ENCODE measurements at regions of chr7 and their contacts with region 1.

Region 1: DNA sequence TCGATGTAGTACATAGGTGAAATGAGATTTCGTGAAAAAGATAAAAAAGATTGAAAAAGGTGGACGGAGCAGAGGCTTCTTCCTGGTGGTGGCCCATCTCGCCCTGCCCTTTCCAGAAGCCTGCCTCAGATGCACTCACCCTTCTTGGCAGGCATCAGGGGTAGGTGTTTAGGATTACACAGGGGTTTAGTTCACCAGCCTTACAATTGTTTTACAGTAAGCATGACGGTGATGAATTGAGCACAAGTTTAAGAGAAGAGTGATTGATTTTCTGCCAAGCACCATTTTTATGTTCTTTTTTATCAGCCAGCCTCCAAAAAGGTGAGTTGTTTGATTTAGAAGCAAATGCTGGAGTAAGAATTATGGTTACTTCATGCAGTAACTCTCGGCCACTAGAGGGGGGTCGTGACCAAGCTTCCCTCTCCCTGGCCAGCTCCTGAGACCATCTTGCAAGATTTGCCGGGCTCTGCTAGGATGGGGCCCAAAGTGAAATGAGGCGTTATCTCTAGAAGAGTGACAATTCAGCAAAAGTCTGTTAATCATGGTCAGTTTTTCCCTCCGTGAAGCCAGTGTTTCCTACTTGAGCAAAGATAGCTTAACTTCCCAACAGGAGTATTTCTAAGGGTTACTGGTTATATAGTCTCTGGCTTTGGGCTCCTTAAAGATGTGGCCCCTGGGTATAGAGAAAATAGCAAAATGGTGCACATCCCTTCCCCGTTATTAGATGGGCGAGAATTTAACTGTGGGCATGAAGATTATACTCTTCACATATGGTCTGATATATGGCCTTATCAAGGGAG is 228.8 kb downstream of the BMPER start:
- DNase-seq: peak; percentile 77
- H3K4me3 Mint-ChIP-seq: peak overlapping the region; percentile 60
- H3K27ac Mint-ChIP-seq: peak overlapping the region; percentile 99
- H3K4me1 Mint-ChIP-seq: peaks cover 45% of the 10 kb centered on the region
- H3K27me3 Mint-ChIP-seq: no peaks in the 10 kb centered on the region
- CTCF ChIP-seq: peak; percentile 81

Region 2: DNA sequence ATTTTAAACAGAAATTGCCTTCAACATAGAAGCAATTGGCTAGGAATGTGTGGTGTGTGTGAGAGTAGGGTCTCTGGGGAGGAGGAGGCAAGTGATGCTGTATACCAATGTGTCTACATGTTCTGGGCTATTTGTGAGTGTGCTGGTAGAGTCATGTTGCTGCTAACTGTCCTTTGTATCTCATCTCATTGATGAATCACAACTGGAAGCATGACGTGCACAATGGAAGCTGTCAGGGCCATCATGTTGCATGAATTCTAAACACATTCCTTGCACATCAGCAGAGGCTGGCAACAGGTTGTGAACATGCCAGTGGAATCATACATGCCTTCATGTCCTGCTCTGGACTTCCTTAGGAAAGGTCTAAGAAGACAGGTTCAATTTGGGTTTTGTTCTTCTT is 29.2 kb before region 1 on chr7:
- CTCF ChIA-PET with region 1: interaction called, 12 read pairs
- POLR2A ChIA-PET with region 1: no interaction called
- intact Hi-C with region 1: no loop called
- DNase-seq: no peak
- H3K4me3 Mint-ChIP-seq: no peak overlapping the region
- H3K27ac Mint-ChIP-seq: no peak overlapping the region
- H3K4me1 Mint-ChIP-seq: peaks cover 5% of the 10 kb centered on the region
- H3K27me3 Mint-ChIP-seq: no peaks in the 10 kb centered on the region
- CTCF ChIP-seq: no peak

Region 3: GRCh38 chr7:34155220-34155908 is 21.2 kb after region 1 on chr7:
- CTCF ChIA-PET with region 1: interaction called, 37 read pairs
- POLR2A ChIA-PET with region 1: interaction called, 4 read pairs
- intact Hi-C with region 1: loop called (anchors 2 kb)
- DNase-seq: peak; percentile 95
- H3K4me3 Mint-ChIP-seq: no peak overlapping the region
- H3K27ac Mint-ChIP-seq: no peak overlapping the region
- H3K4me1 Mint-ChIP-seq: peaks cover 7% of the 10 kb centered on the region
- H3K27me3 Mint-ChIP-seq: no peaks in the 10 kb centered on the region
- CTCF ChIP-seq: no peak

Region 4: GRCh38 chr7:34165929-34166550 is 31.9 kb after region 1 on chr7:
- CTCF ChIA-PET with region 1: interaction called, 78 read pairs
- POLR2A ChIA-PET with region 1: interaction called, 4 read pairs
- intact Hi-C with region 1: loop called (anchors 1 kb)
- DNase-seq: peak; percentile 62
- H3K4me3 Mint-ChIP-seq: no peak overlapping the region
- H3K27ac Mint-ChIP-seq: no peak overlapping the region
- H3K4me1 Mint-ChIP-seq: no peaks in the 10 kb centered on the region
- H3K27me3 Mint-ChIP-seq: no peaks in the 10 kb centered on the region
- CTCF ChIP-seq: peak; percentile 56

Region 5: GRCh38 chr7:34191771-34192479 is 57.7 kb after region 1 on chr7:
- CTCF ChIA-PET with region 1: no interaction called
- POLR2A ChIA-PET with region 1: no interaction called
- intact Hi-C with region 1: no loop called
- DNase-seq: no peak
- H3K4me3 Mint-ChIP-seq: no peak overlapping the region
- H3K27ac Mint-ChIP-seq: no peak overlapping the region
- H3K4me1 Mint-ChIP-seq: no peaks in the 10 kb centered on the region
- H3K27me3 Mint-ChIP-seq: no peaks in the 10 kb centered on the region
- CTCF ChIP-seq: no peak

Region 6: DNA sequence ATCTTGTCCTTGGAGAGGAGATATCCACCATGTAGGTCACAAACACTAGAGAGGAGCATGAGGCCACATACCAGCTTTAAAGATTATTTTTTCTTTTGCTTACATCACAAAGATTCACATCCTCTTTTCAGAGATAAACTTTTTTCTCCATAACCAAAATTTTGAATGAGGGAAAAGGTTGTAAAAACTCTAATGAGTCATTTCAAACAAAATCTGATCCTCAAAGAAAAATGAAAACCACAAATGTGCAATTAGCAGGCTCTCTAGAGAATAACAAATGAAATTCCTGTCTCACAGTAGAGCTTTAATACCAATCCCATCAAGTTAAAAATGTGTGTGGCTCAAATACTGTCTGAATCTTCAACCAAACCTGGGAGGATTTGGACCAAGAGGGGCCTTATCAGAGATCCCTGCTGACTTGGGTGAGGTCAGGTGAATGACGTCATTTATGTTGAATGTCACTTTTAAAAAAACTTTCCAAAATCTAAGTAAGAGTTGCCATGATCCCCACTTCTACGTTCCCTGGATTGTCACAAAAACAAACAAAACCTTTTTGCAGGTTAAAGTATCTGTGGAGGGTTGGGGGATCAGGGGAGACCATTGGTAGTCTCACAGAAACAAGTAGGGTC is 262.4 kb after region 1 on chr7:
- CTCF ChIA-PET with region 1: no interaction called
- POLR2A ChIA-PET with region 1: no interaction called
- intact Hi-C with region 1: loop called (anchors 1 kb)
- DNase-seq: no peak
- H3K4me3 Mint-ChIP-seq: no peak overlapping the region
- H3K27ac Mint-ChIP-seq: no peak overlapping the region
- H3K4me1 Mint-ChIP-seq: no peaks in the 10 kb centered on the region
- H3K27me3 Mint-ChIP-seq: no peaks in the 10 kb centered on the region
- CTCF ChIP-seq: no peak

Region 7: GRCh38 chr7:34430458-34430857 is 296.3 kb after region 1 on chr7:
- CTCF ChIA-PET with region 1: interaction called, 9 read pairs
- POLR2A ChIA-PET with region 1: no interaction called
- intact Hi-C with region 1: loop called (anchors 1 kb)
- DNase-seq: peak; percentile 83
- H3K4me3 Mint-ChIP-seq: no peak overlapping the region
- H3K27ac Mint-ChIP-seq: no peak overlapping the region
- H3K4me1 Mint-ChIP-seq: peaks cover 9% of the 10 kb centered on the region
- H3K27me3 Mint-ChIP-seq: no peaks in the 10 kb centered on the region
- CTCF ChIP-seq: peak; percentile 48

Region 8: DNA sequence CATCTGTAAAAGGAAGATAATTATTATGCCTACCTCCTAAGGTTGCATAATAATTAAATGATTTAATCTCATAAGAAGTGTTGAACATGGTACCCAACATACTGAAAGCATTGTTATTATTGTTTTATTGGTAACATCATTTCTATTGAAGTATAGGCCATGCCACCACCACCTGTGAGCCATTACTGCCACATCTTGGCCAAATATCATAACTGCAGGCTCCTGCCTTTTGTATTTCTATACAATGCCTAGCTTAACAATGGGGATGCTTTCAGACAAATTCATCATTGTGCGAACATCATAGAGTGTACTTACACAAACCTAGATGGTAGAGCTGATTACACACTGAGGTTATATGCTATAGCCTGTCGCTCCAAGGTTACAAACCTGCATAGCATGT is 462.7 kb after region 1 on chr7:
- CTCF ChIA-PET with region 1: interaction called, 21 read pairs
- POLR2A ChIA-PET with region 1: no interaction called
- intact Hi-C with region 1: loop called (anchors 1 kb)
- DNase-seq: peak; percentile 49
- H3K4me3 Mint-ChIP-seq: no peak overlapping the region
- H3K27ac Mint-ChIP-seq: no peak overlapping the region
- H3K4me1 Mint-ChIP-seq: no peaks in the 10 kb centered on the region
- H3K27me3 Mint-ChIP-seq: no peaks in the 10 kb centered on the region
- CTCF ChIP-seq: peak; percentile 63

Measured in MCF 10A (cell line).